ENCODE measurements at regions of chr7 and their contacts with region 1.

Region 1: GRCh38 chr7:102425639-102426267 is 7.6 kb upstream of the ORAI2 start:
- DNase-seq: peak; percentile 95
- ATAC-seq: peak; percentile 76
- H3K4me3 ChIP-seq: peak overlapping the region; percentile 30 to 48 (median 39)
- H3K4me3 Mint-ChIP-seq: peak overlapping the region; percentile 87
- H3K27ac ChIP-seq: peak overlapping the region; percentile 100
- H3K27ac Mint-ChIP-seq: peak overlapping the region; percentile 100
- H3K4me1 ChIP-seq: peaks cover 94 to 99% of the 10 kb centered on the region in 2 donors
- H3K4me1 Mint-ChIP-seq: peaks cover 79% of the 10 kb centered on the region
- H3K27me3 ChIP-seq: no peaks in the 10 kb centered on the region
- H3K27me3 Mint-ChIP-seq: no peaks in the 10 kb centered on the region
- CTCF ChIP-seq: no peak

Region 2: DNA sequence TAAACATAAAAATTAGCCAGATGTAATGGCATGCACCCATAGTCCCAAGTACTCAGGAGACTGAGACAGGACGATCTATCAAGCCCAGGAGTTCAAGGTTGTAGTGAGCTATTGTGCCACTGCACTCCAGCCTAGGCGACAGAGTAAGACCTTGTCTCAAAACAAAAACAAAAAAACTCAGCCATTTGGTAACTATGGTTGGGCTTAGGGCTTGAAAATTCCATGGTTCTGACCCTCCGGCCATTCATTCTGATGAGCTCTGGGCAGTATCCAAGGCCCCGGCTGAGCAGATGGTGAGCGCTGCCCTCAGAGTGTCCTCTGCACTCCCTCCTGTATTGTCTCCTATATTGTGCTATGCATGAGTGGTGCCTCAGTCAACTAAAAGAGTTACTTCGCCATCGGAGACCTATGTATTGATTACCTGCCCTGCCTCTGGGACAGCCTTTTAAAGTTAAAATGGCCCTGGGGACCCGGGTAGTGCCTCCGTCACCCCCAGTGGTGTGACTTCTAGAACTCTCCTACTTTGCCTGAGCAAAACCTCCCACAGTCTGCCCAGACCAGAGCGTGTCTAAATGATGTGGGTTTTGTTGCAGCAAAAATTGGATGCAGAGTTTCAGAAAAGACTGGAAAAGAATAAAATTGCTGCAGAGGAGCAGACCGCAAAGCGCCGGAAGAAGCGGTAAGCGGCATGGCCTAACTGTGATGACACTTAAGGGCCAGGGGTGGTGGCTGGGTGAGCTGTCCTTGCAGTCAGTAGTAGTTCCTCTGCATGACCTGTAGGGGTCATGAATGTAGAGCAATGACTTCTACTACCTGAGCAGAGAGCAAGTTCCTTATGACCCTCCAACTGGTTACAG is 21.5 kb before region 1 on chr7:
- CTCF ChIA-PET with region 1: interaction called, 1,182 read pairs
- POLR2A ChIA-PET with region 1: interaction called, 27 read pairs
- intact Hi-C with region 1: no loop called
- DNase-seq: peak; percentile 81
- ATAC-seq: peak; percentile 86
- H3K4me3 ChIP-seq: no peak overlapping the region
- H3K4me3 Mint-ChIP-seq: no peak overlapping the region
- H3K27ac ChIP-seq: no peak overlapping the region
- H3K27ac Mint-ChIP-seq: no peak overlapping the region
- H3K4me1 ChIP-seq: peaks cover 20 to 28% of the 10 kb centered on the region in 2 donors
- H3K4me1 Mint-ChIP-seq: peaks cover 36% of the 10 kb centered on the region
- H3K27me3 ChIP-seq: no peaks in the 10 kb centered on the region
- H3K27me3 Mint-ChIP-seq: no peaks in the 10 kb centered on the region
- CTCF ChIP-seq: peak; percentile 87

Region 3: GRCh38 chr7:102412548-102412947 is 13.2 kb before region 1 on chr7:
- CTCF ChIA-PET with region 1: interaction called, 1,182 read pairs
- POLR2A ChIA-PET with region 1: interaction called, 223 read pairs
- intact Hi-C with region 1: loop called (anchors 1 kb)
- DNase-seq: peak; percentile 67
- ATAC-seq: no peak
- H3K4me3 ChIP-seq: no peak overlapping the region
- H3K4me3 Mint-ChIP-seq: no peak overlapping the region
- H3K27ac ChIP-seq: no peak overlapping the region
- H3K27ac Mint-ChIP-seq: peak overlapping the region; percentile 34
- H3K4me1 ChIP-seq: peaks cover 58 to 76% of the 10 kb centered on the region in 2 donors
- H3K4me1 Mint-ChIP-seq: peaks cover 77% of the 10 kb centered on the region
- H3K27me3 ChIP-seq: no peaks in the 10 kb centered on the region
- H3K27me3 Mint-ChIP-seq: no peaks in the 10 kb centered on the region
- CTCF ChIP-seq: peak; percentile 68

Measured in B cell (primary cell).